ENCODE measurements at regions of chr22 and their contacts with region 1.

Region 1: DNA sequence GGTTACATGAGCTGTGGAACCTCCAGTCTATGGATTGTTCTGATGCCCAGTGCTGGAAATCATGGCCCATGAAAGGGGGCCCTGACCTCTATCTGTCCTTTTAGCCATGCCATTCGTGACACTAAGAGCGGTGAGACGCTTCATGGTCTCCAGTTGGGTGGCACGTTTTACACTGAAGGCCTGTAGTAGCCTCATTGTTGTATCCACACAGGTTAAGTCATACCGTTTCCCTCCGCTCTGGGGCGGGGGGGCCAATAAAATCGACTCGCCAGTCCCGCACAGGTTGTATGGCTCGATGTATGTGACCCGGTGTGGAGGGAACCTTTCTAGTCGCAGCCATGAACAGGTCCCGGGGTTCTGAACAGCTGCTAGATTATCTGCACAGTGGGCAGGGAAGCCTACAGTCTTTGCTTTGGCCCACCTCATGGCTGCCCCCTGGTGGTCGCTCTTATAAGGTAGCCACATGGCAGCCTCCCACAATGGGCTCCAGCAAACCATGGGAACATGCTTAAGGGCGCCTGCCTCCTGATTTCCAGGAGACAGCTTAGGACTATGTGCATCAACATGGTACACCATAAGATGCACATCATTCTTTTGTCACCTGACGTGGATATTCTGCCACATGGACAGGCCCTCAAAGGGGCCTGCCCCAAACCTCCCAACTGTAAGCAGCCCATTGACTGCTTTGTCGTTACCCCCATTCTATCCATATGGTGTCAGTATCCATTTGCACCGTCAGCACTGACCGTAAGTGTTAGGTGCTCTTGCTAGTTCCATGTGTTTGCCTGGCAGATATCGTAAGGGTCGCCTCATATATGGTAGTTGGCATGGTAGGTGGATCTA is 19.7 kb upstream of the APOL3 start:
- DNase-seq: peak; percentile 52 to 95 (median 81)

Region 2: GRCh38 chr22:36144886-36145541 is 35.2 kb before region 1 on chr22:
- intact Hi-C with region 1: loop called (anchors 5 kb)
- DNase-seq: peak in 41 of 42 donors; percentile 21 to 84 (median 66)

Measured in head of caudate nucleus (tissue), 42 donors.